HEK293 (cell line): ENCODE measurements at regions of chr2 and their contacts with region 1.

Region 1: DNA sequence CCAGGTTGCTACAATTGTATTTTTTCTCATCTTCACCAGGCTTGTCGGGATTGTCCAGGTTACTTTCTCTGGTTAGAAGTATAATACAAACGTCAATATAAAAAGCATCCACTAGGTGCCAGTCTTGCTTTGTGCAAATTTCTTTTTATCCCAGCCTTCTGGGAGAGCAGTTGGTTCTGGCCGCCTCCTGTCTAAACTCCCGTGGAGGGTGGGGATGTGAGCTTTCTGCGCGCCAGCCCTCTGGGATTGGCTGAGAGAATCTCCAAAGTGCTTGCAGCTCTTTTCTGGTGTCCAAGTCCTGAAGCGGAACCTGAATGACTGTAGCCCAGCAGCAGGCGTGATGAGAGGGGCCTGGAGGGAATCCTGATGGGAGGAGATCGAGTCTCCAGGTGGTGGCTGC is 22.4 kb upstream of the TOGARAM2 start:
- H3K4me3 ChIP-seq: no peak overlapping the region
- H3K27ac ChIP-seq: no peak overlapping the region
- H3K4me1 ChIP-seq: no peaks in the 10 kb centered on the region
- CTCF ChIP-seq: peak; percentile 51

Region 2: DNA sequence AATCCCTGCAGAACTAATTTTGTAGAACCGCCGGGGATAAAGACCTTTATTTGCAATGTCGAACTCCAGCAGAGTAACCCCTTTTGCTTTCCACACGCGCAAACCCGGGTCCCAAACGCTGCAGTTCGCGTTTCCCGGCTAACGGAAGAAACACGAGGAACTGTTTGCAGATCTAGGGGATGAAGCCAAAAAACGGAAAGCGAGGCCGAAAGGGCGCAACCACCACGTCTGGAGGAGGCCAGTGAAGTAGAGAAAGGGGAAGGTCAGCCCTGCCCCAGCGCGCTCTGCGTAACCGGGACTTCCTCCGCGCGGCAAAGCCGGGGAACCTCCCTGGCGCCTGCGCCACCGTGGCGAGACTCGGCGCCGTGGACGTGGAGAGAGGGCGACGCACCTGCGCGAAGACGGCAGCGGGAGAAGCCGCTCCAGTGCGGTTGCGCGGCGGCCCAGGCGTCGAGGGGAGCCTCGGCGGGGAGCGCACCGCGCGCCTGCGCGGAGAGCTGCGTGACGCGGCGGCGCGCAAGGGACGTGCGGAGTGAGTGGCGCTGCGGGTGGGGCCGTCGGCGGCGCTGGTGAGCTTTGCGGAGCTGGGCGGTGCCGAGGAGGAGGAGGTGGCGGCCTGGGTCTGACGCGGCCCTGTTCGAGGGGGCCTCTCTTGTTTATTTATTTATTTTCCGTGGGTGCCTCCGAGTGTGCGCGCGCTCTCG is 207.3 kb before region 1 on chr2 and contains the start of gene PPP1CB:
- CTCF ChIA-PET with region 1: no interaction called
- POLR2A ChIA-PET with region 1: no interaction called
- H3K4me3 ChIP-seq: peak within 1 kb of the TSS; percentile 97
- H3K27ac ChIP-seq: peak within 1 kb of the TSS; percentile 98
- H3K4me1 ChIP-seq: peaks cover 15% of the 10 kb centered on the region
- CTCF ChIP-seq: no peak; the same call in 1 of the 2 replicates

Region 3: DNA sequence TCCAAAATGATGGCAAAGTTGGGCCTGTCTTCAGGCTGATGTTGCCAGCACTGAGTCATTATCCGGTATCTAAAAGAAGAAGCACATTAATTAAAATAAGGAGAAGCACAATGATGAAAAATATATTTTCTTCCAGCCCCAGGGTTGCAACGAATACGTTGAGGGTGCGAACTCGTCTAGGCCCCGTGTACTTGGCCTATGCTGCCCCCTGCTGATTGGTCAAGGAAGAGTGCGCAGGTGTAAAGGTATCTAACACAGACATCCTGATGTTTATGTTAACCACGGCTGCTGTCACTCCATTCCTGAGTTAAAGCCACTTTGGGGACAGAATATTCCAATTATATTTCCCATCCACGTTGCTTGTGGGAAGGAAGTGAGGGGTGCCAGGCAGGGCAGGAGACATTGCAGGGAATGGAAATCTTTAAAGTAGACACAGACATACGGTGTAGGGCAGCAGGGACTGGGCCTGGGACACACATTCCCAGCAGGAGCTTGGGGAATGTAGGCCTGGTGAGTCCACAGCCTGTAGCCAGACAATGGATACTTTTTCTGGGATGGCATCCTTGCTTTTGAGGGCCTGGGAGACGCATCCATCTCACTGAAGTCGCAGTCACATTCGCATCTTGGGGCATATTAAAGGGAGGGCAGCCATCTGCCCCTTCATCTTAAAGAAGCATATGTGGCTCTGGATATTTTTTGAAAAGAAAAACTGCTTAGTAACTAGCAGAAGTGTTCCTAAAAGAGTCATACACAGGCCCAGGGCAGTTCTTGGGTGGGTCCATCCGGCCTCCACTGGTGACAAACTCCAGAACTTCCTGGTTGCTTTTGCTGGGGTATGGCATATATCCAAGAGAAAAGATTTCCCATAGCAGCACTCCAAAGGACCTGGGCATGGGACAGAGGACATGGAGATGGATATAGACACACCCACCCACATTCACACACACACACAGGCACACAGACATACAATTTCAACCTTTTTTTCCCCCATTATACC is 238.4 kb after region 1 on chr2:
- CTCF ChIA-PET with region 1: interaction called, 17 read pairs
- POLR2A ChIA-PET with region 1: no interaction called
- H3K4me3 ChIP-seq: no peak overlapping the region
- H3K27ac ChIP-seq: no peak overlapping the region
- H3K4me1 ChIP-seq: no peaks in the 10 kb centered on the region
- CTCF ChIP-seq: peak; percentile 51